IMR-90 (cell line): ENCODE measurements at regions of chr10 and their contacts with region 1.

Region 1: DNA sequence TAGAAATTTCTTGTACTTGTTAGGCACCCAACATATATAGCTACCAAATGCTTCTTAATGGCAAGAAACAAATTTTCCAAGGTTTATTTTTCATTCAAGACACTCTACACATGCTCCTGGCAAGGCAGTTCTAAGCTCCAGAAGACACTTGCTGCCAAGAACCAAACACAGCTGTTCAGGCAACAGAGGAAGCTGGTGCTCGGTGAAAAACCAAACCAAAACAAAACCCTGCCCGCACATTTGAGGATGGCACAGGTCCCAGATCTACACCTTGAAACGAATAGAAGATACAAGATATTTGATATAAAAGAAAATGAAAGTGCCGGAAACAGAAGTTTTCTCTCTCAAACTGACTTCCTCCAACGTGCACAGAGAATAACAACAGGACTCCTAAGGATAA is 4.9 kb upstream of the DNTT start:
- DNase-seq: no peak
- ATAC-seq: no peak
- H3K4me3 ChIP-seq: no peak overlapping the region
- H3K27ac ChIP-seq: no peak overlapping the region
- H3K4me1 ChIP-seq: no peaks in the 10 kb centered on the region
- H3K27me3 ChIP-seq: peaks cover 7% of the 10 kb centered on the region
- CTCF ChIP-seq: no peak
- POLR2A ChIP-seq: no peak
- RAD21 ChIP-seq: no peak

Region 2: DNA sequence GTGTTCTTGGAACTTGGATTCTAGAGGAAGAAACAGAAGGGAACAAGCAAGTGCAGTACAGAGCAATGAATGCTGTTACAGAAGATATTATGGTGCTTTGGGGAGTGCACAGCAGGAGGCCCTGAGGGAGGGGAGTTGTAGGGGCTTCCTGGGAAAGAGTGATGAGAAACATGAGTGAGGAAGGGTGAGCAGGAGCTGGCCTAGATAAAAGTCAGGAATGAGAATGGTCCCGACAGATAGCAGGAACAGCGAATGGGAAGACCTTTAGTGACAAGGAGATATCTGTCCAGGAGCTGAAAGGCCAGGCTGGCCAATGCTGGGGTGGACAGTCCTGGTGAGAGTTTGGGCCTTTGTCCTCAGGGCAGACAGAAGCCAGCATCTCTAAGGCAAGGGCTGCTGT is 276.6 kb before region 1 on chr10:
- CTCF ChIA-PET with region 1: no interaction called
- POLR2A ChIA-PET with region 1: no interaction called
- dilution Hi-C with region 1: no loop called
- in situ Hi-C with region 1: loop called (anchors 5 kb)
- intact Hi-C with region 1: no loop called
- DNase-seq: no peak
- ATAC-seq: no peak
- H3K4me3 ChIP-seq: no peak overlapping the region
- H3K27ac ChIP-seq: no peak overlapping the region
- H3K4me1 ChIP-seq: no peaks in the 10 kb centered on the region
- H3K27me3 ChIP-seq: peaks cover 12% of the 10 kb centered on the region
- CTCF ChIP-seq: no peak
- POLR2A ChIP-seq: no peak
- RAD21 ChIP-seq: no peak